ENCODE measurements at regions of chr1 and their contacts with region 1.

Region 1: GRCh38 chr1:35882945-35883634 is at the start of gene AGO1:
- DNase-seq: peak; percentile 100
- CTCF ChIP-seq: peak; percentile 99

Region 2: DNA sequence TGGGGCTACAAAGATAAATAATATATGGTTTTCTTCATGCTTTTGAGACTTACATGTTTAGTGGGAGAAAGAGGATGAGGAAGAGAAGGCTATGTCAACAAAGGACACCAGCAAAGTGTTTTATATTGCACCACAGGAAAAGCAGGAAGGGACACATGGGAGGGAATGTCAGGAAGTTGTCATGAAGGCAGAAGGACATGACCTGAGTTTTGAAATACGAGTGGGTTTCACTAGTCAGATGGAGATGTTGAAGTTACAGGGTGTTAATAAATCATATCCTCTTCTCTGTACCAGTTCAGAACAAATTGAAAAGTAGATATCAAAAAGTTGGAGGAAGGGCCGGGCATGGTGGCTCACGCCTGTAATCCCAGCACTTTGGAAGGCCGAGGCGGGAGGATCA is 18.3 kb before region 1 on chr1:
- CTCF ChIA-PET with region 1: interaction called, 16 read pairs
- POLR2A ChIA-PET with region 1: interaction called, 3 read pairs
- DNase-seq: no peak
- CTCF ChIP-seq: no peak

Region 3: DNA sequence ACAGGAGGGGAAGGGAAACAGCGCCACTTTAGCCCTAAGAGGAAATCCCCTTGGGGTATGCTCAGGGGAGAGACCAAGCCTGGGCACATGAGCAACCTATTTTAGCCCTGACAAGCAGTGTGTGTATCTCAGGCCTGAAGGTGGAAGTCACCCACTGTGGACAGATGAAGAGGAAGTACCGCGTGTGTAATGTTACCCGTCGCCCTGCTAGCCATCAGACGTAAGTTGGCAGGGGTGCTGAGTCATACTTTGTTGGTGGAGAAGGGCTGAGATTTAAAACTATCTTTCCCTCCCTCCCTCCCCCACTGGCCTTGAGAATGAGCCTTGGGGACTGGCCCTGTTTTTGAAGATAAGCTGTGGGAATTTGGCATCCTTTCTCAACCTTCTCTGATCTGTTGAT is 11.1 kb after region 1 on chr1:
- CTCF ChIA-PET with region 1: interaction called, 14 read pairs
- POLR2A ChIA-PET with region 1: no interaction called
- DNase-seq: peak; percentile 42
- CTCF ChIP-seq: no peak